ENCODE measurements at regions of chr4 and their contacts with region 1.

Region 1: GRCh38 chr4:113394730-113395530 is 345.5 kb downstream of the ANK2 start:
- DNase-seq: peak; percentile 77
- ATAC-seq: peak; percentile 100
- H3K4me3 ChIP-seq: no peak overlapping the region
- H3K27ac ChIP-seq: peak overlapping the region; percentile 61; the same call in 1 of the 2 replicates
- H3K4me1 ChIP-seq: peaks cover 3% of the 10 kb centered on the region; the same call in 1 of the 2 replicates
- H3K27me3 ChIP-seq: no peaks in the 10 kb centered on the region
- CTCF ChIP-seq: peak; percentile 72

Region 2: DNA sequence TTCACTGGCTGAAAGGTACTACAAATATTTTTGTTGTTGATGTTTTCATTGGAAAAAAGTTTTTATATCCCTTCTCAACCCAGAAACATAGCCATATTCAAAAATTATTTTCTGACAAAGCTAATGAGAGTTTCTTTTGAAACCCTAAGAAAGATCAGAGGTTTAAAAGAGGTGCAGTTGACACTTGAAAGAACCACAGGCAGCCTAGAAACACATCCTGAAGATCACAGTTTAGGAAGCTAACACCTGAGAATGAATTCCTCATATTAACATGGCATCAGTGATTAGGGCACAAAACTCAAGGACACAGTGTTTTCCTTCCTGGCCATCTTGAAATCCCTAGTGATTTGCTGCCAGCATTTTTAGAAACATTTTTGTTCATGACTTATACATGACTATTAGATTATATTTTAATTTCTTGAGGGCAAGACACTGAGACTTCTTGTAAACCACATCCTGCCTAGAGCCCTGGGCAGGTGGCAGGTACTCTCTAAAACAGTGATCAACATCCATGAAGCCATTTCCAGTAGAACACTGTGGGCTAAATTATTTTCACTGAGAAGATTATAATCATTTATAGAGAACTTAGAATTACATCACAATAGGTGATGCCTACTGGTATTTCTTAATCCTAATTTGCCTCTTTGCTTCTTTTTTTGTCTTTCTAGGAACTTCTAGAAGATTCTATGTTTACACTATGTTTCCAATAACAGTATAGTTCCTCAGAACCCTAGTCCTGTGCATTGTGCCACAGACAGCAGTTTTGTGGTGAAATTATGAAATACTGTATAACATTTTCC is 504.5 kb after region 1 on chr4:
- CTCF ChIA-PET with region 1: no interaction called
- POLR2A ChIA-PET with region 1: no interaction called
- in situ Hi-C with region 1: no loop called
- intact Hi-C with region 1: loop called (anchors 10 kb)
- DNase-seq: no peak
- ATAC-seq: no peak
- H3K4me3 ChIP-seq: no peak overlapping the region
- H3K27ac ChIP-seq: no peak overlapping the region
- H3K4me1 ChIP-seq: no peaks in the 10 kb centered on the region
- H3K27me3 ChIP-seq: no peaks in the 10 kb centered on the region
- CTCF ChIP-seq: no peak